H1 (cell line): ENCODE measurements at regions of chr7 and their contacts with region 1.

Region 1: GRCh38 chr7:134553976-134554375 is 5.1 kb downstream of the AKR1B15 start:
- DNase-seq: no peak
- H3K4me3 ChIP-seq: no peak overlapping the region
- H3K27ac ChIP-seq: no peak overlapping the region
- H3K4me1 ChIP-seq: no peaks in the 10 kb centered on the region; a peak in 1 of 7 replicates
- H3K27me3 ChIP-seq: no peaks in the 10 kb centered on the region
- CTCF ChIP-seq: peak; percentile 20 to 64 (median 35); a peak in 3 of 4 replicates
- EP300 ChIP-seq: no peak
- POLR2A ChIP-seq: no peak
- RAD21 ChIP-seq: peak; percentile 49 to 56

Region 2: DNA sequence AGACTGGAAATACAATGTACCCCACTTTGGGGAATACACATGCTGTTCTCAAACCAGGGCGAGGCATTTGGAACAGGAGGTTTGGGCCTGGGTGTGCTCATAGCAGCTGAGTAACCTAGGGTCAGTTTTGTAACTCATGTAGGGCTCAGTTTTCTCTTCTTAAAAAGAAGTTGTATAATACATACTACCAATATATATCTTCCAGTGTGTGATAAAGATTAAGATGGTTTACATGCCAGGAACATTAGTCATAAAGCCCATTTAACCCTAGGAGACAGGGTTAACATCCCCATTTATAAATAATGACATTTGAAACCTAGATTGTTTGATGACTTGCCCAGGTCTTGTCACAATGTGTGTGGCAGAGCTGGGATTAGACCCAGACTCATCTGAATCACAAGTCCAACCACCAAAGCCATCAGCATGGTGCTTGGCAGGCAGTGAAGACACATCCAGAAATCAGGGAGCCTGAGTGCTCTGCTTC is 20.6 kb before region 1 on chr7:
- CTCF ChIA-PET with region 1: interaction called, 12 read pairs
- POLR2A ChIA-PET with region 1: no interaction called
- DNase-seq: no peak
- H3K4me3 ChIP-seq: no peak overlapping the region
- H3K27ac ChIP-seq: no peak overlapping the region
- H3K4me1 ChIP-seq: no peaks in the 10 kb centered on the region
- H3K27me3 ChIP-seq: no peaks in the 10 kb centered on the region; a peak in 1 of 7 replicates
- CTCF ChIP-seq: no peak
- EP300 ChIP-seq: no peak
- POLR2A ChIP-seq: no peak
- RAD21 ChIP-seq: no peak

Region 3: DNA sequence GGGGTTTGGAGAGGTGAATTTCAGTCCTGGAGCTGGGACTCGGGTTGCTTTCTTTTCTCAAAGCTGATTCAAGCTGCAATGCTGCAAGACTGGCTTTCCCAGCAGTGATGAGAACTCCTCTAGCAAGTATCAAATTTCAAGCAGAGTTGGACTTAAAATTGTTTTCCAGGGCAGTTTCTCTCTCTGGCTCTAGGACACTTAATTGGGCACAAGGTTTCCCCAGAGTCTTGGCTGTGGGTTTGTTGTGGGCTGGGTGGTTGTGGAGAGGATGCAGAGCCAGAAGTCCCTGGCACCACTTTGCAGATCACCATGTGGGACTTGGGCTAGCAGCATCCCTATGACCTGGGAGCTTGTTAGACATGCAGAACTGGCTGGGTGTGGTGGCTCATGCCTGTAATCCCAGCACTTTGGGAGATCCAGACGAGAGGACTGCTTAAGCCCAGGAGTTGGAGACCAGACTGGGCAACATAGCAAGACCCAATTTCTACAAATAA is 11.7 kb after region 1 on chr7:
- CTCF ChIA-PET with region 1: interaction called, 14 read pairs
- POLR2A ChIA-PET with region 1: no interaction called
- DNase-seq: no peak
- H3K4me3 ChIP-seq: no peak overlapping the region
- H3K27ac ChIP-seq: no peak overlapping the region
- H3K4me1 ChIP-seq: no peaks in the 10 kb centered on the region
- H3K27me3 ChIP-seq: peaks cover 0 to 1% (median 0%) of the 10 kb centered on the region in 4 experiments; a peak in 1 of 7 replicates
- CTCF ChIP-seq: no peak
- EP300 ChIP-seq: no peak
- POLR2A ChIP-seq: no peak
- RAD21 ChIP-seq: no peak

Region 4: GRCh38 chr7:134585897-134586296 is 31.9 kb after region 1 on chr7:
- CTCF ChIA-PET with region 1: no interaction called
- POLR2A ChIA-PET with region 1: no interaction called
- DNase-seq: no peak
- H3K4me3 ChIP-seq: no peak overlapping the region
- H3K27ac ChIP-seq: no peak overlapping the region
- H3K4me1 ChIP-seq: no peaks in the 10 kb centered on the region
- H3K27me3 ChIP-seq: no peaks in the 10 kb centered on the region
- CTCF ChIP-seq: no peak
- EP300 ChIP-seq: no peak
- POLR2A ChIP-seq: no peak
- RAD21 ChIP-seq: no peak